GM13976 (cell line): ENCODE measurements at regions of chr16 and their contacts with region 1.

Region 1: GRCh38 chr16:10743610-10744393 is at the start of gene NUBP1:
- DNase-seq: peak; percentile 98
- CTCF ChIP-seq: no peak

Region 2: GRCh38 chr16:10256784-10257641 is 486.8 kb before region 1 on chr16:
- in situ Hi-C with region 1: loop called (anchors 25 kb)
- DNase-seq: peak; percentile 82
- CTCF ChIP-seq: peak; percentile 70

Region 3: DNA sequence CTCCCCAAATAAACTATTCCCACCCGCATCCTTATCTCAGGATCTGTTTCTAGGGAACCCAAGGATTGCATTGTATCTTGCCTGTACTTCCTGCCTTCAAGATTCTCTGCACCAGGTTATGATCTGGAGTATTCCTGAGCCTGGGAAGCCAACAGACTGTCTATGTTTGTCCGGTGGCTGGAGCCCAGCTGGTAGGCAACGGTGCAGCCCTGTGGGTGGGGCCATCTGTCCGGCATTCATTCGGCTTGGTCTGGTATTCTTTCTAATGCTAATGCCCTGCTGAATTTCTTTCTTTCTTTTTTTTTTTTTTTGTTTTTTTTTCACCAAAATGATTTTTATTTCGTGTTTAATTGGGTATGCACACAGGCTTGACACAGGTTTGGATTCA is 95.5 kb after region 1 on chr16:
- in situ Hi-C with region 1: no loop called
- DNase-seq: no peak
- CTCF ChIP-seq: no peak

Region 4: DNA sequence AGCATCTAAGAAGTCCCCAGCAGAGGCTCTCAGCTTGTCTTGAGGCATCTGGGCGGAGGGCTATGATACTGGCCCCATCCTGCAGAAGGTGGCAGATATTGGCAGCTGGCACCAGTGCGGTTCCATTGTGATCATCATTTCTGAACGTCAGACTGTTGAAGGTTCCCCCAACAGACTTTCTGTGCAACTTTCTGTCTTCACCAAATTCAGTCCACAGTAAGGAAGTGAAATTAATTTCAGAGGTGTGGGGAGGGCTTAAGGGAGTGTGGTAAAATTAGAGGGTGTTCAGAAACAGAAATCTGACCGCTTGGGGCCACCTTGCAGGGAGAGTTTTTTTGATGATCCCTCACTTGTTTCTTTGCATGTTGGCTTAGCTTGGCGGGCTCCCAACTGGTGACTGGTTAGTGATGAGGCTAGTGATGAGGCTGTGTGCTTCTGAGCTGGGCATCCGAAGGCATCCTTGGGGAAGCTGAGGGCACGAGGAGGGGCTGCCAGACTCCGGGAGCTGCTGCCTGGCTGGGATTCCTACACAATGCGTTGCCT is 133.1 kb after region 1 on chr16 and contains the start of gene CIITA:
- in situ Hi-C with region 1: loop called (anchors 10 kb)
- DNase-seq: peak; percentile 84
- CTCF ChIP-seq: no peak